WTC11 (cell line): ENCODE measurements at regions of chr2 and their contacts with region 1.

Region 1: GRCh38 chr2:40554668-40555285 is 102.9 kb upstream of the SLC8A1 start:
- DNase-seq: peak; percentile 83
- ATAC-seq: peak; percentile 98
- H3K4me3 Mint-ChIP-seq: no peak overlapping the region
- H3K27ac Mint-ChIP-seq: no peak overlapping the region
- H3K4me1 Mint-ChIP-seq: 0 out of 2 replicates have a peak, but pooled peaks cover 6% of the 10 kb centered on the region
- H3K27me3 Mint-ChIP-seq: no peaks in the 10 kb centered on the region
- CTCF ChIP-seq: peak; percentile 76

Region 2: DNA sequence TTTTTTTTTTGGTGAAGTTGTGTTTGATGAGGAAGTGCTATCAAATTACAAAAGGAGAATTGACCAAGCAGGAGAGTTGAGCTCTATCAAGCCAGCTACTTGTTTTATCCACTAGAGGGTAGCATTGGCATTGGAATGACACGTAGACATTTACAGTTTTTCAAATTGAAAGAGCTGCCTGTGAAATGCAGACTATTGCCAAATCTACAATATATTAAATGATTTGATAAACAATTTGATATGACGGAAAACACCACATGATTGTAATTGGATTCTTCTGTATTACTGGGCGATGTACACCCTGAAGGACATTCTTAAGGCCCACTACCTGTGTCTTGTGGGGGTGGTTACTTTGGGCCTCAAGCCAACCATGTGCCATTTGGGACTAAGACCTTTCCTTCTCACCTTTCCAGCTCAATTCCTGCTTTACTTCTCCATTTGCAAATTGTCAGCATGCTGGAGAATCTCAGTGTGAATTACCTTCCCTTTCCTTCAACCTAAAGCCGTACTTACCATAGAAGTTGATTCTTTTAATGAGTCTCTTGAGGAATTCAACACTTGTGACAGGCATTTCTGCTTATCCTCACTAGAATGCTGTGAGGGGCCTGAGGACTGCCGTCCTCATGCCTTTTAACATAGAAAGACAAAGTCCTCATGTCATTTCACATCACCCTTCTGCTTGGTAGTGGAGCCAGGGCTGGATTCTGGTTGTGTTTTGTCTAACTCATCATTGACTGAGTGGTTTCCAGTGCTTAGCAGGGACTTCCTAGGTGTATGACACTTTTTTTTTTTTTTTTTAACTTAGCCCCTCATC is 640.9 kb before region 1 on chr2:
- CTCF ChIA-PET with region 1: interaction called, 24 read pairs
- POLR2A ChIA-PET with region 1: no interaction called
- DNase-seq: no peak
- ATAC-seq: peak; percentile 78
- H3K4me3 Mint-ChIP-seq: no peak overlapping the region
- H3K27ac Mint-ChIP-seq: no peak overlapping the region
- H3K4me1 Mint-ChIP-seq: peaks cover 20% of the 10 kb centered on the region
- H3K27me3 Mint-ChIP-seq: no peaks in the 10 kb centered on the region; the same call in 1 of the 2 replicates
- CTCF ChIP-seq: peak; percentile 42; the same call in 1 of the 2 replicates

Region 3: DNA sequence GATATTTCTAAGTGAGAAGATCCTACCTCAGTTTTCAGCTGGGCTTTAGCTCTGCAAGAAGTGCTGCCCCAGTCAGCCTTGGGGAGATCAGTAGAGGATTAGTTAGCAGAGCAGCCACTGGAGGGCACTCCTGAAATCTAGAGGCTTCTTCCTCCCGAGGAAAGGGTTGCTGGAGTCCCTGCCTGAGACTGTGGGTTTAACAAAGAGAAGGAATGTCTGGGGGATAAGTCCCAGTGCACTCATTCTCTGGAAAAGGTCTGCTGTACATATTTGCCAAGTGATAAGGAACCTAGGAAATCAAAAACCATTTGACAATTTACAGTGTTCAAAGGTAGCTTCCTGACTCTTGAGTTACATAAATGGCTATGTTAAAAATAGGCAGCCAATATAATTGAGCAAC is 310.1 kb before region 1 on chr2:
- CTCF ChIA-PET with region 1: interaction called, 10 read pairs
- POLR2A ChIA-PET with region 1: no interaction called
- DNase-seq: peak; percentile 72
- ATAC-seq: peak; percentile 95
- H3K4me3 Mint-ChIP-seq: no peak overlapping the region
- H3K27ac Mint-ChIP-seq: no peak overlapping the region
- H3K4me1 Mint-ChIP-seq: peaks cover 39% of the 10 kb centered on the region
- H3K27me3 Mint-ChIP-seq: no peaks in the 10 kb centered on the region
- CTCF ChIP-seq: no peak

Region 4: GRCh38 chr2:40448468-40449079 is 106.2 kb before region 1 on chr2:
- CTCF ChIA-PET with region 1: interaction called, 22 read pairs
- POLR2A ChIA-PET with region 1: no interaction called
- DNase-seq: no peak
- ATAC-seq: peak; percentile 38; the same call in 1 of the 2 replicates
- H3K4me3 Mint-ChIP-seq: no peak overlapping the region
- H3K27ac Mint-ChIP-seq: no peak overlapping the region
- H3K4me1 Mint-ChIP-seq: peaks cover 31% of the 10 kb centered on the region
- H3K27me3 Mint-ChIP-seq: peaks cover 38% of the 10 kb centered on the region
- CTCF ChIP-seq: peak; percentile 31; the same call in 1 of the 2 replicates

Region 5: GRCh38 chr2:40540026-40540425 is 14.8 kb before region 1 on chr2:
- CTCF ChIA-PET with region 1: interaction called, 10 read pairs
- POLR2A ChIA-PET with region 1: no interaction called
- DNase-seq: no peak
- ATAC-seq: no peak
- H3K4me3 Mint-ChIP-seq: no peak overlapping the region
- H3K27ac Mint-ChIP-seq: no peak overlapping the region
- H3K4me1 Mint-ChIP-seq: peaks cover 18% of the 10 kb centered on the region
- H3K27me3 Mint-ChIP-seq: no peaks in the 10 kb centered on the region
- CTCF ChIP-seq: no peak

Region 6: GRCh38 chr2:40700223-40700924 is 145.6 kb after region 1 on chr2:
- CTCF ChIA-PET with region 1: no interaction called
- POLR2A ChIA-PET with region 1: no interaction called
- DNase-seq: no peak
- ATAC-seq: no peak
- H3K4me3 Mint-ChIP-seq: no peak overlapping the region
- H3K27ac Mint-ChIP-seq: no peak overlapping the region
- H3K4me1 Mint-ChIP-seq: no peaks in the 10 kb centered on the region
- H3K27me3 Mint-ChIP-seq: peaks cover 3% of the 10 kb centered on the region; the same call in 1 of the 2 replicates
- CTCF ChIP-seq: no peak